Pancreas (tissue), 10 donors: ENCODE measurements at regions of chr2 and their contacts with region 1.

Region 1: DNA sequence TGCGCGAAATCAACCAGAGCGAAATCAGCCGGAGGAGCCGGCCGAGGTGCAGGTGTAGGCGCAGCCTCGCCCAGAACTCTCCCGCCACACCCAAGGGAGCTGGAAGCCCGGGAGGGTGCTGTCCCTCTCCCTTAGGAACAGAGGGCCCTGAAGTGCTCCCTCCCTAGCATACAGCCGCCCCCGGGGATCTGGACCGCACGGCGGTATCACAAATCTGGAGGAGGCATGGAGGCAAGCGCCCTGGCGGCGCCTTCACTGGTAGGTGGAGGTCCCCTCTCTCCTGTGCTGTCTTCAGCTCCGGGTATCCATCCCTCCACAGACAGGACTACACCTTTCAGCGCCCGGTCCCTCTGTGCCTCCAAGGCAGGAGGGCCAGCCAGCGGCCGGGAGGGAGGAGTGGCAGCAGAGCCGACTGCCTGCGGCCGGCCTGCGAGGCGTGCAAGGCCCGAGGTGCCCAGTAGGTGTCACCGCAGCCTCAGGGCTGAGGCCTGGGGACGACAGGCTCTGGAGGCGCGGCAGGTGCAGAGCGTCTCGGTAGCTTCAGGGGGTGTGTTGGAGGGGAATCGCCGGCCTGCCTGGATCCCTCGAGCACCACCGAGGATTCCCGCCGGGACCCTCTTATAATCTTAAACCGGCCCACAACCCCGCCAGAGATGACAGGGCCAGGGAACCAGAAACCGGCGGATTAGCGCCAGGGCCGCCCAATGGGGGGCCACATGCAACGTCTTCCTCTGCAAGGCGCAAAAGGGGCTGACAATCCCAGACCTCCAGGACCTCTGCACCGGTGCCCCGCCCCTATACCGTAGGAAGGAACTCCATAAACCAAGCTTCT is 2.8 kb downstream of the IHH start:
- DNase-seq: peak; percentile 72 to 95 (median 87)
- ATAC-seq: peak; percentile 89 to 96 (median 92)
- H3K4me3 ChIP-seq: peak overlapping the region in 1 of 4 donors; percentile 26
- H3K27ac ChIP-seq: no peak overlapping the region
- H3K4me1 ChIP-seq: peaks cover 27 to 32% (median 28%) of the 10 kb centered on the region in 3 donors
- H3K27me3 ChIP-seq: peaks cover 0 to 22% (median 4%) of the 10 kb centered on the region in 4 donors
- CTCF ChIP-seq: peak; percentile 89 to 93 (median 90)

Region 2: GRCh38 chr2:219119422-219120043 is 61.6 kb after region 1 on chr2:
- intact Hi-C with region 1: loop called in 2 of 3 experiments (anchors 5 kb)
- DNase-seq: peak; percentile 38 to 77 (median 60)
- ATAC-seq: peak; percentile 64 to 73 (median 68)
- H3K4me3 ChIP-seq: no peak overlapping the region
- H3K27ac ChIP-seq: no peak overlapping the region
- H3K4me1 ChIP-seq: peaks cover 12 to 22% (median 14%) of the 10 kb centered on the region in 3 donors
- H3K27me3 ChIP-seq: no peaks in the 10 kb centered on the region
- CTCF ChIP-seq: peak; percentile 40 to 61 (median 55)

Region 3: GRCh38 chr2:219149667-219150066 is 91.7 kb after region 1 on chr2:
- intact Hi-C with region 1: loop called in 2 of 3 experiments (anchors 5 to 10 kb)
- DNase-seq: peak in 2 of 6 donors; percentile 45 to 53
- ATAC-seq: peak; percentile 45 to 84 (median 64)
- H3K4me3 ChIP-seq: no peak overlapping the region
- H3K27ac ChIP-seq: peak overlapping the region in 1 of 4 donors; percentile 1
- H3K4me1 ChIP-seq: peaks cover 5 to 9% (median 7%) of the 10 kb centered on the region in 3 donors
- H3K27me3 ChIP-seq: no peaks in the 10 kb centered on the region
- CTCF ChIP-seq: no peak

Region 4: DNA sequence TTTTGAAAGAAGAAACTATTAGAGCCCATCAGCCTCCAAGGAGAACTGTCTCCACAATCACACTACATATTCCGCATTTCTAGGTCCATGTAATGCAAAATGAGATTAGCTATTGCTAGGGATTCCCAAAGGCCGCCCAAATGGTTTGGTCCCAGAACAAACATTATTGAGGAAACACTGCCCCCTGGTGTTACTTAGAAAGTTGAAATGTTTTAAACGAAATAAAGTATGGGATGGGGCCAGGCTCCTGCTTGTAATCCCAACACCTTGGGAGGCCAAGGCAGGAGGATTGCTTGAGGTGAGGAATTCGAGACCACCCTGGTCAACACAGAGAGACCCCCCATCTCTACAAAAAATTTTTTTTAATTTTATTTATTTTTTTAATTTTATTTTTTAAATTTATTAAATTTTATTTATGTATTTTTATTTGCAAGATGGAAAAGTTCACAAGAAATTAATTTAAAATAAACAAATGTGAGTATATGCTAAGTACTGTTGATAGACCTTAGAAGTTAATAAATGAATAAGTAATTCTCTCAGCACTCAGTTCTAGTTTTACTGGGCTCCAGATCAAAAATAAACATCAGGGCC is 97.2 kb after region 1 on chr2:
- intact Hi-C with region 1: loop called in 2 of 3 experiments (anchors 5 to 10 kb)
- DNase-seq: peak in 2 of 6 donors; percentile 49 to 56
- ATAC-seq: peak; percentile 46 to 86 (median 82)
- H3K4me3 ChIP-seq: no peak overlapping the region
- H3K27ac ChIP-seq: no peak overlapping the region
- H3K4me1 ChIP-seq: peaks cover 0 to 4% (median 0%) of the 10 kb centered on the region in 3 donors
- H3K27me3 ChIP-seq: no peaks in the 10 kb centered on the region
- CTCF ChIP-seq: peak; percentile 29 to 59 (median 45)

Region 5: DNA sequence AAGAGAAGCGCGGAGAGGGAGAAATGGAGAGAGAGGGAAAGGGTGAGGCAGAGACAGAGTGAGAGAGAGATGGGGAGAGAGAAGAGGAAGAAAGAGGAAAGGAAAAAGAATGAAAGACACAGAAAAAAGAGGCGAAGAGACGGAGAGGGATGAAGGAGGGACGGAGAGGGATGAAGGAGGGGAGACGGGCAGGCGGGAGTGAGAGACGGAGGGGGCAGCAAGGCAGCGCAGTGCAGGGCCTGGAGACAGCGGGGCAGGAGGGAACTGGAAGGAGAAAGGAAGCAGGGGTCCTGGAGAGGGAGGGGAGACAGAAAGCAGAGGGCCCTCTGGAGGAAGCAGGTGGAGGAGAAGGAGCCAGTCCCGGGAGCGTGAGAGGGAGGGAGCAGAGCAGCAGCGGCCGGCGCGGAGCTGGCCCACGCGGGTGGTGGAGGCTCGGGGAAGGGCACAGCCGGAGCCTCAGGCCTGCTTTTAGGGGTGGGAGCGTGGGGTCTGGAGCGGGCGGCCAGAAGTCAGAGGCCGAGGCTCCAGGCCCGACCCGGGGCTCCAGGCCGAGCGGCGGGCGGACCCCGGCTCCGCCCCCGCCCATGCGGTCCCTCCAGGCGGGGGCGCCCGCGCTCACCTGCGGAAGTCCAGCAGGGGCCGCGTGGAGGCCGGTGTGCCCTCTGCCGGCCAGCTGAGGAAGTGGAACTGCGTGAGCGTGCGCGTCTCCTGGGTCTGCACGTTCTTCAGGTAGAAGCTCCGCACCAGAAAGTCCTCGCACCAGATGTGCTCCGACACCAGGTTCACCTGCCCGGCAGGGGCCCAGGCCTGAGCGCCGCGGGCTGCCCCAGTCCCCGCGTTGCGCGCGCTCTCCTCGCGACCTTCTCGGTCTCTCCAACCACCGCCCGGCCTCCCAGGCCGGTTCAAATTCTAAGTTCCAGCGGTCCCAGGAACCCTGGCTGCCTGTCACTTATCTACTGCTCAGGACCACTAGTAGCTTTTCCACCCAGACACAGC is 236.7 kb after region 1 on chr2:
- intact Hi-C with region 1: loop called in 1 of 3 experiments (anchors 10 kb)
- DNase-seq: peak; percentile 79 to 98 (median 94)
- ATAC-seq: peak; percentile 90 to 97 (median 95)
- H3K4me3 ChIP-seq: peak overlapping the region; percentile 23 to 51 (median 39)
- H3K27ac ChIP-seq: peak overlapping the region; percentile 35 to 54 (median 43)
- H3K4me1 ChIP-seq: no peaks in the 10 kb centered on the region
- H3K27me3 ChIP-seq: no peaks in the 10 kb centered on the region
- CTCF ChIP-seq: peak; percentile 97 to 100 (median 98)

Region 6: GRCh38 chr2:219965287-219966194 is 907.6 kb after region 1 on chr2:
- intact Hi-C with region 1: no loop called
- DNase-seq: no peak
- ATAC-seq: no peak
- H3K4me3 ChIP-seq: no peak overlapping the region
- H3K27ac ChIP-seq: no peak overlapping the region
- H3K4me1 ChIP-seq: no peaks in the 10 kb centered on the region
- H3K27me3 ChIP-seq: no peaks in the 10 kb centered on the region
- CTCF ChIP-seq: no peak